Posterior vena cava (tissue), 2 donors: ENCODE measurements at regions of chr2 and their contacts with region 1.

Region 1: DNA sequence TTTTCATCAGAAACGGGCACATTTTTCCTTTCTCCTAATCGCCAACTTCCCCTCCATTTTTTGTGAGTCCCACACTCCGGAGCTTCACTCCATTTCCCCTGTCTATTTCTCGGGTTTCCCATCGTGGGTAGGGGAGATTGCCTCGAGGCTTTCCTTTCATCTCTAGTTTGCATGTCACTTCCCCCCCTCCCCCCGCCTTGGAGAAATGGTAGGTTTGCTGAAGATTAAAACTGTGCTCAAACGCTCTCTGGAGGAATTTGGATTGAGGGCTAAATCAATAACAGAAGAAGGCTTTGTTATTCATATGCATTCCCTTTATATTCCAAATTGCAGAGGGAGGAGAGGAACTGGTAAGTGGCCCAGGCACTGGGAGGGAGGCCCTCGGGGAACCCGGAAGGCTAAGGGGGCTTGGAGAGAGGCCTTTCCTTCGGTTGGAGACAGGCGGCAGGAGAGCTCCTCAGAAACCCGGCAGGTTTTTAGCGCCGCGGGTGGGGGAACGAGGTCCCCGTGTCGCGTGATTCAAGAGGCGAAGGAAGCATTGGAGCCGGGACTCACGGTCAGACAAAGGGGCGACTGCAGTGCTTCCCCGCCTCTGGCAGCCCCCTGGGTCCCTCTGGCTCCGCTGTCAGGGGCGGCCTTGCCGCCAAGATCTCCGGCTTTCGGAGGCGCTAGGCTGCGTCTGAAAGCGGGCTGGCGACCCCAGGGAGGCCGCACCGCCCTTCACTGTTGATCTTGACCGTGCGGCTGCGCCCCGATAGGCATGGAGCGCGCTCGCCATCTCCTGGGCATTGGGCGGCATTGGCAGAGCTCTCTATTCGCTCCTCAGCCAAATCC is 2.4 kb upstream of the HOXD12 start:
- DNase-seq: peak; percentile 89

Region 2: DNA sequence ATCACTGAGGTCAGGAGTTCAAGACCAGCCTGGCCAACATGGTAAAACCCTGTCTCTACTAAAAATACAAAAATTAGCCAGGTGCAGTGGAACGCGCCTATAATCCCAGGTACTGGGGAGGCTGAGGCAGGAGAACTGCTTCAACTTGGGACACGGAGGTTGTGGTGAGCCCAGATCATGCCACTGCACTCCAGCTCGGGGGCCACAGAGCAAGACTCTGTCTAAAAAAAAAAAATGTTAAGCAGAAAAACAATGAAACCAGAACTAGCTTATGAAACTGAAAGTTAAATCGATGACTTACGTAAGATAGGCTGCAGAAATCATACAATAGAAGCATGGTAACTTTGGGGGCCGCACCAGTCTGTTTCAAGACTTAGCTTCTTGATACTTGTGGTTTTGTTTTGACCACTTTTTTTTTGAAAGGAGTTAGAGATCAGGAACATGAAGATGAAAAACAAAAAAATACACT is 1604.2 kb before region 1 on chr2:
- intact Hi-C with region 1: loop called in 1 of 2 experiments (anchors 10 kb)
- DNase-seq: no peak

Region 3: DNA sequence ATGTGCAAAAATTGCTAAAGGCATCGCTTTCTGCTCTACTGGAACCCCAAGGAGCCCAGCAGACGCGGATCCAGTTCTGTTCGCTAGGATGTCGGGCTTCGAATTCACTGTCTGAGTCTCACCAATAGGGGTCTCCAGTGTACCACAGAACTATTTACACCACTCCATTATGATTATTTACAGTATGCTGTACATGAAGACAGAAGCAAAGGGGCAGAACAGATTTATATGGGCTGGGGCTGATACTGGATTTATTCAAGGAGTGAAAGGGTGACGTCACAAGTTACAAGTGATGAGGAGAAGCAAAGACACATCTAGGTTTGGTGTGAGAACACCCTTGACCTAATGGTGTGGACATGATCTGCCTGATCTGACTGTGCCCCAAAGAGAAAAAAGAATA is 730.4 kb before region 1 on chr2:
- intact Hi-C with region 1: loop called in 1 of 2 experiments (anchors 10 kb)
- DNase-seq: no peak